Ovary (tissue), 10 donors: ENCODE measurements at regions of chr14 and their contacts with region 1.

Region 1: GRCh38 chr14:105203057-105203531 is 22.0 kb upstream of the NUDT14 start:
- DNase-seq: peak; percentile 64 to 86 (median 79)
- H3K4me3 ChIP-seq: no peak overlapping the region
- H3K27ac ChIP-seq: no peak overlapping the region
- H3K4me1 ChIP-seq: peaks cover 8% of the 10 kb centered on the region
- H3K27me3 ChIP-seq: no peaks in the 10 kb centered on the region
- CTCF ChIP-seq: peak; percentile 87 to 94 (median 89)
- EP300 ChIP-seq: no peak
- POLR2A ChIP-seq: no peak

Region 2: GRCh38 chr14:104545151-104545941 is 657.7 kb before region 1 on chr14:
- intact Hi-C with region 1: no loop called
- DNase-seq: peak in 1 of 5 donors; percentile 6
- H3K4me3 ChIP-seq: no peak overlapping the region
- H3K27ac ChIP-seq: no peak overlapping the region
- H3K4me1 ChIP-seq: no peaks in the 10 kb centered on the region
- H3K27me3 ChIP-seq: no peaks in the 10 kb centered on the region
- CTCF ChIP-seq: no peak
- EP300 ChIP-seq: no peak
- POLR2A ChIP-seq: no peak

Region 3: DNA sequence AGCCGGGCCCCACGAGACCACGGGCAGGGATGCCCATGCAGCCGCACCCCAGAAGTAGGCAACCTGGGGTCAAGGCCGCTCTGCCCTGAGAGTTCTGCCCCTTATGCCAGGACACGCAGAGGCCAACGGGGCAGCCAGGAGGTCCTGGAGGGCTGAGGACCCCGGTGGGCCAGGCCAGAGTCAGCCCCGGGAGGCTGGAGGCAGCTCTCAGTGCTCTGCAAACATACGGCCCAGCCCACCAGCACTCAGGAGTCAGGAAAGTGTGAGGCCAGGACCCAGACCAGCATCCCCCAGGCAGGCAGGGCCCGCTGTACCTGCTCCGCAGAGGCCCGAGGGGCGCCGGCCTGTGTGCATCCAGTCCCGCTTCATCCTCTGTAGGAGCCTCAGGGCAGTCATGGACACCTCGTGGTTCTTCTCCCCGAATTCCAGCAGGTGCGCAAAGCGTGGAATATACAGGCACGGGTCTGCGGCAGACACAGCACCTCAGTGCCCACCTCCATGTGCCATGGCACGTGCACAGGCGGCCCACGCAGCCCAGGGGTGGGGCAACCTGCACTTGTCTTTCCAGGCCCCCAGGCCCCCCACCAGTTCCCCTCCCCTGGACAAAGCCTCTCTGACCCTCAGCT is 38.0 kb after region 1 on chr14:
- intact Hi-C with region 1: no loop called
- DNase-seq: no peak
- H3K4me3 ChIP-seq: no peak overlapping the region
- H3K27ac ChIP-seq: no peak overlapping the region
- H3K4me1 ChIP-seq: no peaks in the 10 kb centered on the region
- H3K27me3 ChIP-seq: no peaks in the 10 kb centered on the region
- CTCF ChIP-seq: no peak
- EP300 ChIP-seq: no peak
- POLR2A ChIP-seq: no peak

Region 4: DNA sequence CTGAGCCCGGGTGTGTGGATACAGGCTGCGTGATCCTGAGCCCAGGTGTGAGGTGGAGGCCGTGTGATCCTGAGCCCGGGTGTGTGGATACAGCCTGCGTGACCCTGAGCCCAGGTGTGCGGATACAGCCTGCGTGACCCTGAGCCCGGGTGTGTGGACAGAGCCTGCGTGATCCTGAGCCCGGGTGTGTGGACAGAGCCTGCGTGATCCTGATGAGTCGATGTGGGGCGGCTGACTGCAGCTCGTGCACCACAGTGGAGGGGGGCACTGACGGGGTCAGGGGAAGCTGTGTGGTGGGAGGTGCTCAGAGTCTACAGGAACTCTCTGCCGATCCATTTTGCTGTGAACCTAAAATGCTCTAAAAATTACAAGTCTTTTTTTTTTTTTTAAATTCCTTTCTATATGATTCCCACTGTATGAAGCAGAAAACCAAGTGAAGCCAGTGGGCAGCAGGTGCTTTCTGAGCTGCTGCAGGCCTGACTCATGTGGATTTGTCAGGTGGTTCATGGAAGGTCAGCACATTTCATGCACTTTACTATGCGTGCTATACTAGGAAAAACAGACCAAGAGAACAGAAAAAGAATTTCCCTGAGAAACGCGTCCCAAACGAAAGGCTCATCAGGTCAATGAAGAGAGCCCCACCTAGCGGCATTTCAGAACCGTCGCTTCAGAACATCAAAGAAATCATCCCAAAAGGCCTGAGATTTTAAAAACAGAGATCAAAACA is 78.4 kb after region 1 on chr14:
- intact Hi-C with region 1: loop called in 2 of 4 experiments (anchors 5 to 10 kb)
- DNase-seq: no peak
- H3K4me3 ChIP-seq: no peak overlapping the region
- H3K27ac ChIP-seq: no peak overlapping the region
- H3K4me1 ChIP-seq: peaks cover 2% of the 10 kb centered on the region
- H3K27me3 ChIP-seq: no peaks in the 10 kb centered on the region
- CTCF ChIP-seq: peak in 2 of 3 donors; percentile 23 to 34
- EP300 ChIP-seq: no peak
- POLR2A ChIP-seq: no peak

Region 5: DNA sequence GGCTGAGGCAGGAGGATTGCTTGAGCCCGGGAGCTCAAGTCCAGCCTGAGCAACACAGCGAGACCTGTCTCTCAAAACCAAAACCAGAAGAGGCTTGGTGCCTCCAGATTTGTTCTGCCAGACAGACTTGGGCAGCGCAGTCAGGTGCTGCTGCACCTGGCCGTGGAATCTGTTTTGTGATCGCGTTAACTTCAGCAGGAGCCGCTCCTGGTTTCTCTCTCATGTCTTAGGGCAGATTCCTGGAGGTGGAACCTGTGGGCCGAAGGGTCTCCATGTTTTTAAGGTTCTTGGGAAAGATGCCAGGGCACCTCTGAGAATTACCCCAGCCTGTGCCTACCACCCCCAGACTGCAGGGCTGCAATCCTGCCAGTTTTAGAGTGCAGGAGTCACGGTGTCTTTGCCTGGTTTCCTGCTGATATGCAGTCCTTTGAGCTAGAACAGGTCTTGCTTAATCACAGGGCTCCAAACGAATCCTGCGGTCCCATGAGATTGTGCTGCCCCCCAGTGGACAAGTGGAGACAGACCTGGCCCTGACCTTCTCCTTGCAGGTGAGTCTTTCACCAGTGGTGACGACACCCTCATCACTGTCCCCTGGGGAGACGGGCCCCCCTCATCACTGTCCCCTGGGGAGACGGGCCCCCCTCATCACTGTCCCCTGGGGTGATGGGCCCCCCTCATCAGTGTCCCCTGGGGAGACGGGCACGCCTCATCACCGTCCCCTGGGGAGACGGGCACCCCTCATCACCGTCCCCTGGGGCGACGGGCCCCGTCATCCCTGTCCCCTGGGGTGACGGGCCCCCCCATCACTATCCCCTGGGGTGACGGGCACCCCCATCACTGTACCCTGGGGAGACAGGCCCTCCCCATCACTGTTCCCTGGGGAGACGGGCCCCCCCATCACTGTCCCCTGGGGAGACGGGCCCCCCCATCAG is 149.1 kb after region 1 on chr14:
- intact Hi-C with region 1: loop called (anchors 2 to 5 kb)
- DNase-seq: peak; percentile 66 to 86 (median 81)
- H3K4me3 ChIP-seq: no peak overlapping the region
- H3K27ac ChIP-seq: no peak overlapping the region
- H3K4me1 ChIP-seq: no peaks in the 10 kb centered on the region
- H3K27me3 ChIP-seq: no peaks in the 10 kb centered on the region
- CTCF ChIP-seq: peak; percentile 51 to 67 (median 58)
- EP300 ChIP-seq: no peak
- POLR2A ChIP-seq: no peak